ENCODE measurements at regions of chr10 and their contacts with region 1.

Region 1: DNA sequence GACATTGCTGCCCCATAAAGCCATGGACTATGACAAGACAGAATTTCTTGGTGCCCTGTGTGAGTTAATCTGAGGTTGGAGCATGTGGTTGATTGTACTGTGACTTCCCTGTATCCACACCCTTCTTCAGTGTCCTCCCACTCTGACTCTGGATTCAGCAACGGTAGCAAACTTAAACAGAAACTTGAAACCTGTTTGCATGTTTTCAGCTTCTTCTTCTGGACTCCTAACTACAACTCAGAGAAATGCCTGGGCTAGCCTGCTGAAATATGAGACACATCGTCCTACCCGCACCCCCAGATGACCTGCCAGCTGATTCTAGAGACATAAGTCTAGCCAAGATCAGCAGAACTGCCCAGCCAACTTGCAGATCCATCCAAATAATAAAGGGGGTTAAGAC is 78.4 kb downstream of the IPMK start:
- DNase-seq: no peak
- ATAC-seq: no peak
- H3K4me3 ChIP-seq: no peak overlapping the region
- H3K4me3 Mint-ChIP-seq: no peak overlapping the region
- H3K27ac ChIP-seq: no peak overlapping the region
- H3K27ac Mint-ChIP-seq: no peak overlapping the region
- H3K4me1 ChIP-seq: no peaks in the 10 kb centered on the region
- H3K4me1 Mint-ChIP-seq: no peaks in the 10 kb centered on the region
- H3K27me3 ChIP-seq: no peaks in the 10 kb centered on the region
- H3K27me3 Mint-ChIP-seq: peaks cover 13 to 22% (median 16%) of the 10 kb centered on the region in 5 donors

Region 2: GRCh38 chr10:58220769-58221451 is 31.6 kb after region 1 on chr10:
- CTCF ChIA-PET with region 1: no interaction called
- POLR2A ChIA-PET with region 1: no interaction called
- intact Hi-C with region 1: loop called in 1 of 2 experiments (anchors 1 kb)
- DNase-seq: no peak
- ATAC-seq: no peak
- H3K4me3 ChIP-seq: no peak overlapping the region
- H3K4me3 Mint-ChIP-seq: no peak overlapping the region
- H3K27ac ChIP-seq: no peak overlapping the region
- H3K27ac Mint-ChIP-seq: no peak overlapping the region
- H3K4me1 ChIP-seq: no peaks in the 10 kb centered on the region
- H3K4me1 Mint-ChIP-seq: peaks cover 0 to 9% (median 4%) of the 10 kb centered on the region in 7 donors
- H3K27me3 ChIP-seq: no peaks in the 10 kb centered on the region
- H3K27me3 Mint-ChIP-seq: no peaks in the 10 kb centered on the region

Region 3: DNA sequence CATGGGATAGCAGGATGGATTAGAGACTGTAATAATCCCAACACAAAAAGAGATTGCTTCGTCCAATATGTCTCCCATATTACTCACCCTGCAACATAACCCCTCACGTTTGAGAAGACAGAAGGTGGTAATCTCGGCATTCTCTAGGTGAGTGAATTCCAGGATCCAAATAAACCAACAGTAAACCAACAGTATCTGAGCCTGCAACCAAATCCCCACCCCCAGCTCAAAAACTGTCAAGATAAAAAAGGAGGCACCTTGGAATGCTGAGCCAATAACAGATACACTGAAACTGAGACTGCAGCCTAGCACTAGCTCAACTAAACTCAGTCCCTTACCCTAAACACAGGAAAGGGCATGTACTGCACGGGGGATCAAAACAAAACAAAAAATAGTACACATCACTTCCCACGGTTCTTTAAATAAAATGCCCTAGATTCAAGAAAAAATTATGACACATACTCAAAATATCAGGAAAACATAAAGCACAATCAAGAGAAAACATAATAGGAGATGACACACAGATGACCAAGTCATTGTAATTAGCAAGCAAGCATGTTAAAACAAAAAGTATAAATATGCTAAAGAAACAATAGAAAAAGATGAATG is 50.4 kb after region 1 on chr10:
- CTCF ChIA-PET with region 1: no interaction called
- POLR2A ChIA-PET with region 1: no interaction called
- intact Hi-C with region 1: loop called in 1 of 2 experiments (anchors 10 kb)
- DNase-seq: no peak
- ATAC-seq: no peak
- H3K4me3 ChIP-seq: no peak overlapping the region
- H3K4me3 Mint-ChIP-seq: no peak overlapping the region
- H3K27ac ChIP-seq: no peak overlapping the region
- H3K27ac Mint-ChIP-seq: no peak overlapping the region
- H3K4me1 ChIP-seq: no peaks in the 10 kb centered on the region
- H3K4me1 Mint-ChIP-seq: peaks cover 25 to 45% (median 34%) of the 10 kb centered on the region in 7 donors
- H3K27me3 ChIP-seq: no peaks in the 10 kb centered on the region
- H3K27me3 Mint-ChIP-seq: no peaks in the 10 kb centered on the region

Measured in naive thymus-derived CD4-positive, alpha-beta T cell (primary cell).